ENCODE measurements at regions of chr1 and their contacts with region 1.

Region 1: GRCh38 chr1:3261007-3261968 is 192.3 kb downstream of the PRDM16 start:
- DNase-seq: no peak
- ATAC-seq: peak; percentile 5
- H3K4me3 ChIP-seq: no peak overlapping the region
- H3K27ac ChIP-seq: no peak overlapping the region
- H3K4me1 ChIP-seq: peaks cover 2 to 7% of the 10 kb centered on the region in 2 donors
- H3K27me3 ChIP-seq: no peaks in the 10 kb centered on the region

Region 2: DNA sequence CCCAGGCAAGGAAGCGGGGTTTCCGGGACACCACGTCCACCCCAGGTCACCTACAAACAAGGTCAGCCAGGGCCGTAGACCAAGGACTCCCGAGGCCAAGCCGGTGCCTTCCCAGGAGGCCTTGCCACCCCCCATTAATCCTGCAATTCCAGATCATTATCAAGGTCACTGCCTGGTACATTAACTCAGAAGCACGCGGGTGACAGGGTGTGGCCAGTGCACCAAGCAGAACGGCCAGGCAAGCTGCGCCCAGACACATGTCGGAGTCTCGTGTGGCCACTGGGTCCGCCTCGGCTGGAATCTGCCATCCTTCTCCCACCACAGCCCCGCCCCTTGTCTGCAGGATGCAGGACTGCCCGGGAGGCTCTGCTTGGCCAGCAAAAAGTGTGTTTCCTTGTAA is 47.6 kb before region 1 on chr1:
- intact Hi-C with region 1: loop called in 1 of 2 experiments (anchors 1 kb)
- DNase-seq: no peak
- ATAC-seq: no peak
- H3K4me3 ChIP-seq: no peak overlapping the region
- H3K27ac ChIP-seq: peak overlapping the region in 1 of 2 donors; percentile 3
- H3K4me1 ChIP-seq: no peaks in the 10 kb centered on the region
- H3K27me3 ChIP-seq: no peaks in the 10 kb centered on the region

Region 3: DNA sequence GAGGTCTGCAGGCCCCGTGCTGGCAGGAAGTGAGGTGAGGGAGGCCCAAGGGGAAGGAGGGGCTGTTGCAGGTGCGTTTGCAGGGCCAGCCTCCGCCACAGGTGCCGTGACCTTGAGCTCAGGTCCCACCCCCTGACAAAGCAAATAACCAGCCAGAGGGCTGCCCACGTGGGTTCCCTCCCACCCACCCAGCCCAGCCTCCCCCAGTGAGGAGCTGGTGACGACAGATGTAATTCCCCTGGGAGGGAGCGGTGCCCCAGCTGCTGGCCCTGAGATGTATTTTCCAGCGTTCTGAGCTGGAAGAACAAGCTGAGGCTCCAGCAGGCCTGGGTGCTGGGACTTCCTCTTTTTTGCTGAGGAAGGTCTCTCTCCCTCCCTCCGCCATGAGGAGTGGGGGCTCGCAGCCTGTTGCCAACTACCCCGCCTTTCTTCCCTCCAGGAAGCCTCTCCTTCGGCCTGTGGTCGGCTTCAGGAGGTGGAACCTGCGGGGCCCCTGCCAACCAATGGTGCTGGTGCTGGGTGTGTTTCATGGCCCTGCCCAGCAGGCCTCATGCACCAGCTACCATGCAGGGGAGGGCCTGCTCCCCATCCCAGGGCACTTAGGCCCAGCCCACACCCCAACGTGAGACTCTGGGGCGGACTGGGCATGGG is 39.1 kb before region 1 on chr1:
- intact Hi-C with region 1: loop called in 1 of 2 experiments (anchors 5 kb)
- DNase-seq: peak in 1 of 2 donors; percentile 62
- ATAC-seq: no peak
- H3K4me3 ChIP-seq: no peak overlapping the region
- H3K27ac ChIP-seq: peak overlapping the region in 1 of 2 donors; percentile 61
- H3K4me1 ChIP-seq: no peaks in the 10 kb centered on the region
- H3K27me3 ChIP-seq: no peaks in the 10 kb centered on the region

Region 4: GRCh38 chr1:3763351-3764125 is 502.2 kb after region 1 on chr1:
- intact Hi-C with region 1: no loop called
- DNase-seq: peak in 1 of 2 donors; percentile 65
- ATAC-seq: no peak
- H3K4me3 ChIP-seq: no peak overlapping the region
- H3K27ac ChIP-seq: no peak overlapping the region
- H3K4me1 ChIP-seq: no peaks in the 10 kb centered on the region
- H3K27me3 ChIP-seq: no peaks in the 10 kb centered on the region